Heart left ventricle (tissue), 16 donors: ENCODE measurements at regions of chr13 and their contacts with region 1.

Region 1: DNA sequence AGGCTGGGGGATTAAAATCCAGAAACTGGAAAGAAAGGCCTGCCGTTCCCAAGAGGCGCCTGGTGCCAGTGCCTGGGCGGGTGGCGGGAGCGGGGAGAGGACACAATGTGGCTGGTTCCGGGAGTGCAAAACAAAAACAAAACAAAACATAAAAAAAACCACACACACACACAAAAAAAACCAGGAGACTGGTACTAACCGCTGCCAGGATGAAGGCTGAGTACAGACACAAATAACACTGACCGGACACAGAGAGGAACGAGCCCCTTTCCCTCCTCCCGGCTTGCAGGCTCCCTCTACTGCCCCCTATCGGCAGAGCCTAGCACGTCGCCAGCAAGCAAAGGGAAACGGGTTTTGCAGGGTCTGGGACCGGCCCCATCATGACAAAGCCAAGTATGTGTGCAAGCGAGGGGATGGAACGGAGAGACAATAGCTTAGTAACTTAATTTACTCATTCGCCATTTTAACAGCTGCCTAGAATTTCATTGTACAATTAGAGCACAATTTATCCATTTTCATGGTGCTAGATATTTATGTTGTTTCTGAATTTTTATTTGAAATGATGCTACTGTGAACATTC is 17.9 kb upstream of the ZDHHC20 start:
- DNase-seq: peak; percentile 82 to 89 (median 83)
- ATAC-seq: peak; percentile 59 to 85 (median 74)
- H3K4me3 ChIP-seq: peak overlapping the region in 11 of 12 donors; percentile 2 to 59 (median 50)
- H3K27ac ChIP-seq: peak overlapping the region in 6 of 12 donors; percentile 13 to 51 (median 41)
- H3K4me1 ChIP-seq: peaks cover 0 to 15% (median 8%) of the 10 kb centered on the region in 12 donors
- H3K27me3 ChIP-seq: no peaks in the 10 kb centered on the region
- CTCF ChIP-seq: peak; percentile 94 to 99 (median 97)
- POLR2A ChIP-seq: no peak

Region 2: GRCh38 chr13:20940083-20940880 is 536.7 kb before region 1 on chr13:
- intact Hi-C with region 1: loop called (anchors 1 to 10 kb)
- DNase-seq: no peak
- ATAC-seq: no peak
- H3K4me3 ChIP-seq: no peak overlapping the region
- H3K27ac ChIP-seq: peak overlapping the region in 8 of 12 donors; percentile 22 to 78 (median 44)
- H3K4me1 ChIP-seq: peaks cover 0 to 13% (median 8%) of the 10 kb centered on the region in 12 donors
- H3K27me3 ChIP-seq: peaks cover 0 to 5% (median 0%) of the 10 kb centered on the region in 9 donors
- CTCF ChIP-seq: no peak
- POLR2A ChIP-seq: no peak

Region 3: GRCh38 chr13:21106089-21106488 is 370.9 kb before region 1 on chr13:
- intact Hi-C with region 1: loop called in 8 of 10 experiments (anchors 2 to 5 kb)
- DNase-seq: no peak
- ATAC-seq: no peak
- H3K4me3 ChIP-seq: no peak overlapping the region
- H3K27ac ChIP-seq: no peak overlapping the region
- H3K4me1 ChIP-seq: no peaks in the 10 kb centered on the region
- H3K27me3 ChIP-seq: no peaks in the 10 kb centered on the region
- CTCF ChIP-seq: no peak
- POLR2A ChIP-seq: no peak

Region 4: DNA sequence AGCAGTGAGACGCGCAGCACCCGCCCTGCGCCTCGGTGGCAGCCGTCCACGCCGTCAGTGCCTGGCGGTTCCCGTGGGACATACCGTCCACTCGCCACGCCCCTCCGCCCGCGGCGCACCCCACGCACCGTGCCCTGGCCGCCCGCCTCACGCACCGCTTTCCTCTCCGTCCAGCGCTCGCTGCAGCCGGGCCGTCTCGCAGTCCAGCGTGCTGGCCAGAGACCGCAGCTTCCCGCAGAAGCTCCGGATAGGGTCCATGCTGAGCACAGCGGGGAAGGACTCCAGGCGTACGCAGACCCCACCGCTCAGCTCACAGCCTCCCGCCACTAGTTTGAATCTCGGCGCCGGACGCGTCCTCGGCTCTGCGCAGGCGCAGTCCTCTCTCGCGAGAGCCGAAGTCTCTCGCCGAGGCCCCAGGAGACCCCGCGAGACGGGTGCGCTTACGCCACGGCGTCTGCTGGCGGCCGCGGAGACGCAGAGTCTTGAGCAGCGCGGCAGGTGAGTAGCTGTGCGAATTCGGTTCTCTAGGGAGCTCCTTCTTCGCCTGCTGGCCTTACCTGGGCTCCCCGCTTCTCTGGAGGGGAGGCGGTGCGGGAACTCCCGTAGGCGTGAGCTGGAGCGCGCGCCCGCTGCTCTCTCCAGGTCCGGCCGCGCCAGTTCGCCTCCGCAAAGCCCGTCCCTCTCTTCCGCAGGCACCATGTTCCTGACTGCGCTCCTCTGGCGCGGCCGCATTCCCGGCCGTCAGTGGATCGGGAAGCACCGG is 300.6 kb before region 1 on chr13 and contains the starts of genes MRPL57 and SKA3:
- intact Hi-C with region 1: loop called in 1 of 10 experiments (anchors 2 kb)
- DNase-seq: peak; percentile 90 to 96 (median 93)
- ATAC-seq: peak; percentile 98
- H3K4me3 ChIP-seq: peak within 1 kb of the TSS; percentile 74 to 99 (median 85)
- H3K27ac ChIP-seq: peak within 1 kb of the TSS; percentile 94 to 99 (median 96)
- H3K4me1 ChIP-seq: peaks cover 0 to 21% (median 14%) of the 10 kb centered on the region in 12 donors
- H3K27me3 ChIP-seq: no peaks in the 10 kb centered on the region
- CTCF ChIP-seq: peak in 4 of 12 donors; percentile 11 to 35 (median 16)
- POLR2A ChIP-seq: peak in 1 of 2 donors; percentile 95
- total RNA-seq, gene MRPL57: 19.0 to 51.6 (median 22.5) TPM
- total RNA-seq, gene SKA3: 0.33 to 4.5 (median 0.59) TPM in 6 of 9 donors, not detected in the others

Region 5: GRCh38 chr13:21383090-21383489 is 93.9 kb before region 1 on chr13:
- intact Hi-C with region 1: loop called in 1 of 10 experiments (anchors 10 kb)
- DNase-seq: no peak
- ATAC-seq: no peak
- H3K4me3 ChIP-seq: no peak overlapping the region
- H3K27ac ChIP-seq: no peak overlapping the region
- H3K4me1 ChIP-seq: no peaks in the 10 kb centered on the region
- H3K27me3 ChIP-seq: no peaks in the 10 kb centered on the region
- CTCF ChIP-seq: no peak
- POLR2A ChIP-seq: no peak